GM10248 (cell line): ENCODE measurements at regions of chr11 and their contacts with region 1.

Region 1: GRCh38 chr11:130131961-130132850 is 27.4 kb upstream of the ST14 start:
- DNase-seq: peak; percentile 77
- CTCF ChIP-seq: peak; percentile 90

Region 2: GRCh38 chr11:129881570-129882170 is 250.5 kb before region 1 on chr11:
- CTCF ChIA-PET with region 1: interaction called, 17 read pairs
- POLR2A ChIA-PET with region 1: no interaction called
- DNase-seq: peak; percentile 31
- CTCF ChIP-seq: peak; percentile 23

Region 3: GRCh38 chr11:129930296-129930695 is 201.9 kb before region 1 on chr11:
- CTCF ChIA-PET with region 1: interaction called, 264 read pairs
- POLR2A ChIA-PET with region 1: no interaction called
- DNase-seq: no peak
- CTCF ChIP-seq: no peak

Region 4: DNA sequence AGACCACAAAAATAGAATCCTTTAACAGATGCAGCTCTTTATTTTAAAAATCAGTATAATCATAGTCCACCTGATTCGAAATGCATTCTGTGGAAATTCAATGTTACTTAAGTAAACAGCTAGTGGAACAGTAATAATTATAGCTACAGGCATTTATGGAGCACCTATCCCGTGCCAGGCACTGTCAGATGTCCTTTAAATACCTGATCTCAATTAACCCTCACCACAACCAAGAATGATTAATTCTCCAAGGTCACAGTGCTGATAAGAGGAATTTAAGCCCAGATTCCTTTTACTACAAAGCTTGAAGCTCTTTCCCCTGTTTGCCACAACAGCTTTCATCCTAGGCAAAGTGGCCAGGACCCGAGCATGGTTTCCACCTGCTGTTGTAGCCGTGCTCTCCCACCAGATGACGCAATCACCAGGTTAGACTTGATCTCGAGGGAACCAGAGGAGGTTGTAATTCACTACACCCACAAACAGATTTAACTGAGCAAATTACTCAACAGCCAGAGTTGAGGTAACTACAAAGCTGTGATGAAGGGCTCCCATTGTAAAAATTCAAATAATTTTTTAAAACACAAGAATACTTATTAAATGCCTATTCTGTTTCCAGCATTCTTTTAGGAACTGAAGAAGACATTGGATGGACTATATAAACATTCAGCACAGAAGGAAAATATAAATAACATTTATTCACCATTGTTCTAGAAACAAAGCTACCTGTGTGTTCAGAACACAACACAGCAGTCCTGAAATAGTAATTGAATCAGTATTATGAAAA is 139.9 kb before region 1 on chr11:
- CTCF ChIA-PET with region 1: interaction called, 10 read pairs
- POLR2A ChIA-PET with region 1: no interaction called
- DNase-seq: peak; percentile 50
- CTCF ChIP-seq: peak; percentile 26

Region 5: GRCh38 chr11:130118636-130119387 is 13.4 kb before region 1 on chr11:
- CTCF ChIA-PET with region 1: interaction called, 60 read pairs
- POLR2A ChIA-PET with region 1: no interaction called
- DNase-seq: peak; percentile 32
- CTCF ChIP-seq: no peak

Region 6: GRCh38 chr11:130213143-130213978 is 81.2 kb after region 1 on chr11:
- CTCF ChIA-PET with region 1: interaction called, 14 read pairs
- POLR2A ChIA-PET with region 1: no interaction called
- DNase-seq: peak; percentile 86
- CTCF ChIP-seq: peak; percentile 94